Dorsolateral prefrontal cortex (tissue), 120 donors: ENCODE measurements at regions of chr11 and their contacts with region 1.

Region 1: GRCh38 chr11:1515082-1516060 is 28.8 kb upstream of the MOB2 start:
- DNase-seq: peak; percentile 78 to 93 (median 86)
- H3K4me3 ChIP-seq: peak overlapping the region in 48 of 59 donors; percentile 8 to 58 (median 33)
- H3K27ac ChIP-seq: peak overlapping the region in 38 of 59 donors; percentile 1 to 74 (median 44)
- H3K27me3 ChIP-seq: no peaks in the 10 kb centered on the region
- CTCF ChIP-seq: peak; percentile 82 to 99 (median 97)

Region 2: GRCh38 chr11:1192741-1193325 is 322.5 kb before region 1 on chr11:
- intact Hi-C with region 1: no loop called
- DNase-seq: peak in 3 of 10 donors; percentile 1 to 38 (median 12)
- H3K4me3 ChIP-seq: no peak overlapping the region
- H3K27ac ChIP-seq: no peak overlapping the region
- H3K27me3 ChIP-seq: peaks cover 0 to 33% (median 15%) of the 10 kb centered on the region in 45 donors
- CTCF ChIP-seq: no peak

Region 3: GRCh38 chr11:1202776-1203504 is 312.4 kb before region 1 on chr11:
- intact Hi-C with region 1: loop called (anchors 5 kb)
- DNase-seq: peak; percentile 35 to 76 (median 49)
- H3K4me3 ChIP-seq: no peak overlapping the region
- H3K27ac ChIP-seq: no peak overlapping the region
- H3K27me3 ChIP-seq: peaks cover 0 to 24% (median 5%) of the 10 kb centered on the region in 45 donors
- CTCF ChIP-seq: peak; percentile 64 to 95 (median 90)

Region 4: DNA sequence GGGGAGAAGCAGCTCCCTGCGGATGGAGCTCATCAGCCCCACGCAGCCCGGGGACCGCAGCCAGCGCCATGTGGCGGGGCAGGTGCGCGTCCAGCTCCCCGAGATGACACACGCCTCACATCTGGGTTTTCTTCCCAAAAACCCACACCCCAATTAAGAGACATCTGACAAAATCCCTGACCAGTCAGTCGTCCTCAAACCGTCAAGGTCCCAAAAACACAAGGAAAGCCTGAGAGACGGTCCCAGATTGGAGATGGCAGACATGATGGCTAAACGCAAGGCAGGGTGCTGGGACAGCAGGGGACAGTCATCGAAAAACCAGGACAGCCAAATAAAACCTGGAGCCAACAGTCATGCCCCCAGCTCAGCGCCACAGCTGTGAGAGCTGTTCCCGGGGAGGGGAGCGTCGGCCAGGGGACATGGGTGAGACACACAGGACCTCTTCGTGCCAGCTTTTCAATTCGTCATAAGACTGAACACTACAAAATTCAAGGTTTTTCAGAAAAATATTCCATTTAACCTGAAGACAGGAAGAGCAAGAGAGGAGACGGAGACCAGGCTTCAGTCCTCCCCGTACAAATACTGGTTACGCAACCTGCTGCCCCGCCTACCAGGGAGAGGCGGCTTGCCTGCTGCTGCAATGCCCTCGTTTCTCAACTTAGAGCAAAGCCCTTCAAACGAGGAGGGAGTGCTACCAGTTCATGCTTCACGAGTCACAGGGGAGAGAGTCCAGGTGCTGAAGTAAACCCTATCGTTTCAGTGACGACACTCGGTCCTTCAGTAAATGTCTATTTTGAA is 216.5 kb before region 1 on chr11:
- intact Hi-C with region 1: loop called in 1 of 2 experiments (anchors 5 kb)
- DNase-seq: peak in 8 of 10 donors; percentile 52 to 90 (median 85)
- H3K4me3 ChIP-seq: peak overlapping the region in 25 of 59 donors; percentile 1 to 44 (median 18)
- H3K27ac ChIP-seq: peak overlapping the region; percentile 8 to 98 (median 84)
- H3K27me3 ChIP-seq: no peaks in the 10 kb centered on the region
- CTCF ChIP-seq: no peak

Region 5: DNA sequence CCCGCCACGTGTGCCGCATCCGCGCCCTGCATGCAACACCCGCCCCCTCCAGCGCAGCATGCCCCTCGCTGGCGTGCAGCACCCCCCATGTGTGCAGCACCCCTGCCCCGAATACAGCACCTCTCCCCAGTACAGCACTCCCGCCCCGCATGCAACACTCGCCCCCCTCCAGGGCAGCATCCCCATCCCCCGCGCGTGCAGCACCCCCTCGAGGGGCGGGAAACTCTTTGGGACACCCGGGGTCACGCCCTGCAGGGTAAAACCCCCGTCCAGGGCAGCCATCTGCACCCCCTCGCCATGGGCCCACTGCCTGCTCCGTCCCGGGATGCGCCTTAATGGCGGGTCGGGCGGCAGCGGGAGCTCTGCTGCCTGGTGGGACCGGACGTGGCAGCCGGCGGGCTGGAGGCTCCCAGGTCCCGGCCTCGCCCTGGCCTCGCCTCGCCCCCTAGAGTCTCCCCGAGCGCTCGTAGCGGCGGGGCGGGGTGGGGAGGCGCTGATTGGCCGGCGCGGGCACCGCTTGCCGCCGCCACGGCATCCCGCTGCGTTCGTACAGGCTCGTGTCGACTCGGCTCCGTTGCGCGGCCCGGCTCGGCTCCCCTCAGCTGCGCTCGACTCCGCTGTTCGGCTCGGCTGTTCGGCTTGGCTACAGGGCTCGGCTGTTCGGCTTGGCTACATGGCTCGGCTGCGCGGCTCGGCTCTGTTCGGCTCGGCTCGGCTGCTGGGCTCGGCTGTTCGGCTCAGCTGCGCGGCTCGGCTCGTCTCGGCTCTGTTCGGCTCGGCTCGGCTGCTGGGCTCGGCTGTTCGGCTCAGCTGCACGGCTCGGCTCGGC is 126.1 kb before region 1 on chr11:
- intact Hi-C with region 1: loop called in 1 of 2 experiments (anchors 10 kb)
- DNase-seq: peak; percentile 94 to 98 (median 97)
- H3K4me3 ChIP-seq: peak overlapping the region; percentile 47 to 91 (median 77)
- H3K27ac ChIP-seq: peak overlapping the region in 57 of 59 donors; percentile 44 to 95 (median 86)
- H3K27me3 ChIP-seq: no peaks in the 10 kb centered on the region
- CTCF ChIP-seq: peak in 53 of 56 donors; percentile 13 to 69 (median 45)

Region 6: DNA sequence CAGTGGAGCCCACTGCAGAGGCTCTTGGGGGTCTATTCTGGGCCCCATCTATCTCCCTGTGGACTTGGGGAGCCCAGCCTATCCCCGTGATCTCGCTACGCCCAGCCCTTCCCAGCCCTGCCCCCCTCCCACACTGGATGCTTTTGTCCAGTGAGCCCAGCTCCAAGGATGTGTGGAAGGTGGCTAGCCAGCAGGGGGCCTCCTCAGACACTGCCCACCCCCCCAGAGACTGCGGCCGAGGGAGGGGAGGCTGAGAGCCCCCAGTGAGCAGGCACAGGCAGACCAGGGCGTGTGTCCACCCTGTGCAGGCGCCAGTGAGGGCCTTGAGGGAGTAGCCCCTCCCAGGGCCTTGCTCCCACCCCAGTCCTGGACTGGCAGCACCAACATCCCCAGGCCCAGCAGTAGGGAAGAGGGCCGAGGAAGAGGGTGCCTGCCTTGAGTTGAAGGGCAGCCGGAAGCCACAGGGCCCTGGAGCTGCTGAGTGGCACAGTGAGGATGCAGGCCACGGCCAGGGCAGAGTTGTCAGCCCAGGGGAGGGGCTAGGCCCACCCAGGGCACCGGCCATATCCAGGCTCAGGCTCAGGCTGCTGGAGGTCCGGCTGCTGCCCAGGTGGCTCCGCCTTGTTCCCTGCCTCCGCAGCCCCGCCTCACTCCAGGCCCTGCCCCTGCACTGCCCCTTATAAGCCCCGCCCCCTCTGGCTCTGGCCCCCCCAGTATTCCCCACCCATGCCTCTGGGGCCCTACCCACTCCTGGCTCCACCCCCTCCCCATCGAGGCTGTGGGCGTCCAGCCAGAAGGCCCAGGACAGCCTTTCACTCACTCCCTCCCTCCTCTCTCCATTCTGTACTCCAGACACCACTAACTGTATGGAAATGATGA is 56.8 kb before region 1 on chr11:
- intact Hi-C with region 1: loop called (anchors 2 to 5 kb)
- DNase-seq: peak in 4 of 10 donors; percentile 35 to 58 (median 52)
- H3K4me3 ChIP-seq: no peak overlapping the region
- H3K27ac ChIP-seq: peak overlapping the region in 56 of 59 donors; percentile 49 to 93 (median 78)
- H3K27me3 ChIP-seq: no peaks in the 10 kb centered on the region
- CTCF ChIP-seq: peak in 43 of 56 donors; percentile 19 to 50 (median 32)

Region 7: DNA sequence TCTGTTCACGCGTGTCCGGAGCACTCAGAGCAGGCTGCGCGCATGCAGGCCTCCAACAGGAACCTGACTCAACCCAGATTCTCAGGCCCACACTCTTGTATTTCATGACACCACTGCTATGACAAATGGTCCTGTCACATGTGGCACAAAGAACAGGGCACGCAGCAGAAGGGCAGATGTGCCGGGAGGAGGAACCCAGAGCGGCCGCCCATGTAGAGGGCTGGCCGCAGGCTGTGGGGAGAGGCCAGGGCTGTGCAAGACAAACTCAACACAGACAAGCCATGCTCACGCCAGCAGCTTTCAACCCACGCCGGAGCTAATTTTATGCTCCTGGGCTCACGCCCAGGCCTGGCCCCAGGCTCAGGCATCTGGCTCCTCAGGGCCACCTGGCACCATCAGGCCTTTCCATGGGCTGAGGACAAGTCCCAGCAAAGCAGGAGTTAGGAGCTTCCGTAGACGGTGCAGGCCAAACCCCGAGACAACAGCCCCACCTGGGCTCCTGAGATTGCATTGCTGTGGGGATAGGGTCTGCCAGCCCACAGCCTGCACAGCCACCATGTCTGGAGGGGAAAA is 16.7 kb after region 1 on chr11:
- intact Hi-C with region 1: no loop called
- DNase-seq: peak in 8 of 10 donors; percentile 55 to 88 (median 80)
- H3K4me3 ChIP-seq: peak overlapping the region in 13 of 59 donors; percentile 4 to 33 (median 20)
- H3K27ac ChIP-seq: peak overlapping the region in 58 of 59 donors; percentile 9 to 91 (median 75)
- H3K27me3 ChIP-seq: no peaks in the 10 kb centered on the region
- CTCF ChIP-seq: no peak